ENCODE measurements at regions of chr1 and their contacts with region 1.

Region 1: DNA sequence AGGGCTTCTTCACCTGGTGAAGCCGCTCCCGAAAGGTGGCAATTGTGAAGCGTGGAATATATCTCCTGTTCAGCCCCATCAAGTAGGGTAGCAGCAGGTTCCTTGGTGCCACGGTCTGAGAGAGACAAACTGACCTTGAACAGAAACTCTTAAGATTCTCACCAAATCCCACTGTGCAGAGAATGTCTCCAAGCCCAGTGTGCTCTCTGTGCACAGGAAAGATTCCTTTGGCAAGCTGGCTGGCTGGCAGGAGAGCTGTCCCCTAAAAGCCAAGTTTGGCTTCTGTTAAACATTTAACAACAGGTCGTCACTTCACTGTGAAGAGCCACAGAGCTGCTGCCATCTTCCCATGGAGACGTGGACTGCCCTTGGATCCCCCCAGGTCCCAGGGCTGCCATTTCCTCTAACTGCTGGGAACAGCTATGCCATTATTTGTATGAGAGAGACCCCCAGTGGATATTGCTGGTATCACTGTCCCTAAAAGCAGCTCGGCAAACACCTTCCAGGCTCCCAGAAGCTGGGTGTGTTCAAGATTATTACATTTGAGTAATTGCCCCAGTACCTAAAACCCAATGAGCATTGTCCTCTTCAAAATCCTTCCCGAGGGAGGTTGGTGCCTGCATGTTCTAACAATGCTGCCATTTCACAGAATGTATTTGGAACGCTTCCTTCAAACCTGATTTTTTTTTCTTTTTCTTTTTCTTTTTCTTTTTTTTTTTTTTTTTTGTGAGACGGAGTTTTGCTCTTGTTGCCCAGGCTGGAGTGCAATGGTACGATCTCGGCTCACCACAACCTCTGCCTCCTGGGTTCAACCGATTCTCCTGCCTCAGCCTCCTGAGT is 71.8 kb downstream of the CD58 start:
- DNase-seq: peak; percentile 56 to 89 (median 56)
- ATAC-seq: peak; percentile 89
- H3K4me3 ChIP-seq: no peak overlapping the region
- H3K4me1 ChIP-seq: peaks cover 3% of the 10 kb centered on the region
- CTCF ChIP-seq: peak; percentile 71

Region 2: DNA sequence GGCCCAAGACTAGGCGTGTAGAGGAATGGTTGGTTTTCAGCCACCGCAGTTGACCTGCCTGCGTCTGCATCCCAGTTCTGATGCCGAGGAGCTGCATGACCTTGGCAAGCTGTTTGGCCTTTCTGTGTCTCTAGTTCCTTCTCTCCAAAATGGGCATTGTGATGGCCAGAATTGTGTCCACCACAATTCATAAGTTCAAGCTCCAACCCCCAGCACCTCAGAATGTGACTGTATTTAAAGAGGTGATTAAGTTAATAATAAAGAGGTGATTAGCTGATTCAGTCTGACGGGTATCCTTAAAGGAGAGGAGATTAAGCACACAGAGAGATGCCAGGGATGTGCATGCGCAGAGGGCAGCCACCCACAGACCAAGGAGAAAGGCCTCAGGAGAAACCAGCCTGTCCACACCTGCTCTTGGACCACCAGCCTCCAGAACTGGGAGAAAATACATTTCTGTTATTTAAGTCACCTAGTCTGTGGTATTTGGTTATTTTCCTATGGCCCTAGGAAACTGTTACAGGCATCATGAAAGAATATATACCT is 359.3 kb before region 1 on chr1:
- intact Hi-C with region 1: loop called (anchors 5 kb)
- DNase-seq: no peak
- ATAC-seq: no peak
- H3K4me3 ChIP-seq: no peak overlapping the region
- H3K4me1 ChIP-seq: no peaks in the 10 kb centered on the region
- CTCF ChIP-seq: no peak

Region 3: GRCh38 chr1:116360429-116361173 is 138.4 kb before region 1 on chr1:
- intact Hi-C with region 1: loop called in 1 of 2 experiments (anchors 10 kb)
- DNase-seq: peak in 1 of 3 donors; percentile 37
- ATAC-seq: peak; percentile 57
- H3K4me3 ChIP-seq: no peak overlapping the region
- H3K4me1 ChIP-seq: no peaks in the 10 kb centered on the region
- CTCF ChIP-seq: no peak